Naive thymus-derived CD4-positive, alpha-beta T cell (primary cell): ENCODE measurements at regions of chr19 and their contacts with region 1.

Region 1: DNA sequence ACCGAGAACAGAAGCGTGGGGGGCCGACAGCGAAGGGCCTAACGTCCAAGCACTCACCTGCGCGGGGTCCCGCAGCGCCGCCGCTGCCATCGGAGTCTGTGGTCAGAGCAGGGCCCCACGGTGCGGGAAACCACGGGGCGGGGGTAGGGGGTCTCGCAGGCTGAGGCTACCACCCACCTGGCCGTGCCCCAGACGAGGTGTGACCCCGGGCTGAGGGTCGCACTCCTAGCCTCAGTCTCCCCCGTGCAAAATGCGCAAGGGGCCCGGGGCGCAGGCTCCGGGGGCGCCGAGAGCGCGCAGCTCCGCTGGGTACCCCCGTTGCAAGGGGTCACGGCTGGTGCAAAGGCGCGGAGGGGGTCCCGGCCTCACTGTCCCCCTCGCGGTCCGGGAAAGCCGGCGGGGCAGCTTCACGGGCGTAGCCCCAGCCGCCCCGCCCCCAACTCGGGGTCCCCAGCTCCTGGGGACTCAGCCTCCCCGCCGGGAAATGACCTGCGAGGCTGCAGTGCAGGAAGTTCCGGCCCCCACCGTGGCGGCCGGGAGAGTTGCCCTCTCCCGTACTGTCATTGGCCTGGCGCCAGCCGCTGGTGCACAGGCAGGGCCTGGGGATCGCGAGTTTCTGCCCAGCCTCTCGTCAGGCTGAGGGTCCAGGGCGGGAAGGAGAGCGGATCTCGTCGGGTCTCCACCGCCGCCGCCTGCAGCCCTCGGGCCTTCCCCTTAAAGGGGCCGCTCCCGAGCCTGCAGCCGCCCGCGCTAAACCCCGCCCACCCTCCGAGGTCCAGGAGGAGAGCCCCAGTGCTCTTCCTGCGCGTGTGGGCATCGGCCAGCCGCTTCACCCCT is at the start of gene ZNF792:
- DNase-seq: peak; percentile 20 to 67 (median 36)
- ATAC-seq: peak; percentile 63
- H3K4me3 ChIP-seq: peak within 1 kb of the TSS; percentile 74
- H3K4me3 Mint-ChIP-seq: peak within 1 kb of the TSS; percentile 90 to 98 (median 96)
- H3K27ac ChIP-seq: peak within 1 kb of the TSS; percentile 80
- H3K27ac Mint-ChIP-seq: peak within 1 kb of the TSS; percentile 86 to 99 (median 93)
- H3K4me1 ChIP-seq: peaks cover 14 to 17% of the 10 kb centered on the region in 2 donors
- H3K4me1 Mint-ChIP-seq: peaks cover 21 to 42% (median 26%) of the 10 kb centered on the region in 7 donors
- H3K27me3 ChIP-seq: no peaks in the 10 kb centered on the region
- H3K27me3 Mint-ChIP-seq: peaks cover 0 to under 1% (median 0%) of the 10 kb centered on the region in 5 donors
- total RNA-seq, gene ZNF792: 11.0 to 33.9 (median 14.7) TPM

Region 2: DNA sequence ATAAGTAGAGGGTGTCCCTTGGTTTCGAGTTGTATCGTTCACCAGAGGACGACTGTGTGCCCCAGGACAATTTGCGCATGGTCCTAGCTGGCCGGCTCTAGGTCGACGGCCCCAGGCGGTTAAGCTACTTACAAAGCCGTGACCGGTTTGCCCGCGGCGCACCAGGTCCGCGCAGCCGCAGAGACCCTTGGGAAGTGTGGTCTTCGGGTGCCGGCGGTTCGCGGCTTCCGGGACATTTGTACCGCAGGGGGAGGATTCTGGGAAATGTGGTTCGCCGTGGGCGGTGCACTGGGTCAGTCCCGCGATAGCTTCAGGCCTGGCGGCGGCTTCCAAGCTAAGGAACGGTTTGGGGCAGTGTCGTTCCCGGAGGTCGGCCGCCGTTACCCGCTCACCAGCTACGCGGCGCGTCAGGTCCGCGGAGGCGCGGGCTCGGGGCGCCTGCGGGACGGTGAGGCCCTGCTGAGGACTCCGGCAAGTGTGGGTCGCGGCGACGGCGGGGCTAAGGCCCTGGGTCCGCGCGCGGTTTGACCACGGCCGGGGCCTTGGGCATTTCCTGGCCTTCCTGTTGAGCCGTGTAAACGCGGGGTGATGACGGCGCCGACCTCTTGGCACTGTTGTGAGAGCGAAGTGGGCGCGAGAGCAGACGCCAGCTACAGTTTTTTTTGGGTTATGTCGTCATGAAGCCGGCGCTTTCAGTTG is 286.3 kb before region 1 on chr19 and contains the start of gene ZNF302:
- CTCF ChIA-PET with region 1: no interaction called
- POLR2A ChIA-PET with region 1: interaction called, 4 read pairs
- intact Hi-C with region 1: loop called in 1 of 2 experiments (anchors 5 kb)
- DNase-seq: peak; percentile 87 to 96 (median 94)
- ATAC-seq: peak; percentile 95
- H3K4me3 ChIP-seq: peak within 1 kb of the TSS; percentile 93
- H3K4me3 Mint-ChIP-seq: peak within 1 kb of the TSS; percentile 92 to 99 (median 96)
- H3K27ac ChIP-seq: peak within 1 kb of the TSS; percentile 80
- H3K27ac Mint-ChIP-seq: peak within 1 kb of the TSS; percentile 94 to 100 (median 99)
- H3K4me1 ChIP-seq: peaks cover 14 to 15% of the 10 kb centered on the region in 2 donors
- H3K4me1 Mint-ChIP-seq: peaks cover 20 to 56% (median 35%) of the 10 kb centered on the region in 7 donors
- H3K27me3 ChIP-seq: no peaks in the 10 kb centered on the region
- H3K27me3 Mint-ChIP-seq: peaks cover 9 to 18% (median 12%) of the 10 kb centered on the region in 5 donors
- total RNA-seq, gene ZNF302: 13.6 to 61.4 (median 25.7) TPM

Region 3: DNA sequence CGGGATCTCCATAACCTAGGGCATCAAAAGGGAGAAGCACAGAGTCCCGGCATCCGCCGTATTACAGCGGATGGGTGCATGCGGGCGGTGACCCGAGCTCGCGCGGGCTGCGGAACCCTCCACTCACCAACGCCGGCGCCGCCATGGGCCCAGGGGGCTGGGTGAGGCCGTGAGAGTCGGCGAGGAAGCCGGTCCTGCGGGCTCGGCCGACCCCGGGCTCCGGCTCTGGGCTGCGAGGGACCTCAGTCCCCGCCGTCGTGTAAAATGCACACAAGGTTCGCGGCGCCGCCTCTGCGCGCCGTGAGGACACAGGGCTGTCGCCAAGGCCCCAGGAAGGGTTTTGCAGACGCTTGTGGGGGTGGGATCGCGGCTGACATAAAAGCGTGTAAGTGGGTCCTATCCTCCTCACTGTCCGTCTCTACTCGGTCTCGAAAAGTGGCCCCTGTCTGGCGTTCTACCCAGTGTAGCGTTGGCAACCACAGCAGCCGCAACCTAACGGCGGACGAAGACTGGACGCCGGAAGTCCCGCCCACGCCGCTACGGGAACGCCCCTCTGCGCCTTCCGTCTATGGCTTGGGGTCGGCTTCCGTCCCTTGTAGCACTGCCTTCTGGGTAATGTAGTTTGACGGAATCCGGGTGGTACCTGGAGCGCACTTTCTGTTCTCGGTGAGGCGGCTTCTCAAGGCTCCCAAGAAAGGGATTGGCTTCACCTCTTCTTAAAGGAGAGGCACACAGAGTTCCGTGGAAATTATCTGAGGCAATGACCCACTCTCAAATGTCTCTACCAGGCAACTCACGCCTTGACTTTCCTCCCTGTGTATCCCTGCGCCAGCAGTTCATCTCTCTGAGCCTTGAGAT is 190.9 kb before region 1 on chr19 and contains the start of gene ZNF599:
- CTCF ChIA-PET with region 1: no interaction called
- POLR2A ChIA-PET with region 1: interaction called, 3 read pairs
- intact Hi-C with region 1: loop called in 1 of 2 experiments (anchors 2 kb)
- DNase-seq: peak; percentile 72 to 89 (median 87)
- ATAC-seq: peak; percentile 99
- H3K4me3 ChIP-seq: peak within 1 kb of the TSS; percentile 88
- H3K4me3 Mint-ChIP-seq: peak within 1 kb of the TSS; percentile 92 to 99 (median 96)
- H3K27ac ChIP-seq: peak within 1 kb of the TSS; percentile 81
- H3K27ac Mint-ChIP-seq: peak within 1 kb of the TSS; percentile 84 to 97 (median 95)
- H3K4me1 ChIP-seq: peaks cover 7 to 10% of the 10 kb centered on the region in 2 donors
- H3K4me1 Mint-ChIP-seq: peaks cover 13 to 21% (median 20%) of the 10 kb centered on the region in 7 donors
- H3K27me3 ChIP-seq: no peaks in the 10 kb centered on the region
- H3K27me3 Mint-ChIP-seq: peaks cover 0 to 15% (median 5%) of the 10 kb centered on the region in 5 donors
- total RNA-seq, gene ZNF599: 2.9 to 11.6 (median 5.3) TPM

Region 4: GRCh38 chr19:34926685-34927375 is 37.0 kb before region 1 on chr19 and contains the start of gene ZNF30:
- CTCF ChIA-PET with region 1: no interaction called
- POLR2A ChIA-PET with region 1: interaction called, 7 read pairs
- intact Hi-C with region 1: loop called (anchors 2 to 5 kb)
- DNase-seq: peak; percentile 57 to 78 (median 74)
- ATAC-seq: peak; percentile 95
- H3K4me3 ChIP-seq: peak within 1 kb of the TSS; percentile 76
- H3K4me3 Mint-ChIP-seq: peak within 1 kb of the TSS; percentile 84 to 95 (median 92)
- H3K27ac ChIP-seq: peak within 1 kb of the TSS; percentile 61
- H3K27ac Mint-ChIP-seq: peak within 1 kb of the TSS; percentile 49 to 84 (median 72)
- H3K4me1 ChIP-seq: peaks cover 0 to 5% of the 10 kb centered on the region in 2 donors
- H3K4me1 Mint-ChIP-seq: peaks cover 10 to 34% (median 23%) of the 10 kb centered on the region in 7 donors
- H3K27me3 ChIP-seq: no peaks in the 10 kb centered on the region
- H3K27me3 Mint-ChIP-seq: peaks cover 0 to 6% (median 0%) of the 10 kb centered on the region in 5 donors
- total RNA-seq, gene ZNF30: 2.0 to 13.1 (median 3.5) TPM

Region 5: GRCh38 chr19:34953092-34953491 is 10.7 kb before region 1 on chr19:
- CTCF ChIA-PET with region 1: no interaction called
- POLR2A ChIA-PET with region 1: interaction called, 14 read pairs
- intact Hi-C with region 1: no loop called
- DNase-seq: no peak
- ATAC-seq: no peak
- H3K4me3 ChIP-seq: no peak overlapping the region
- H3K4me3 Mint-ChIP-seq: no peak overlapping the region
- H3K27ac ChIP-seq: no peak overlapping the region
- H3K27ac Mint-ChIP-seq: no peak overlapping the region
- H3K4me1 ChIP-seq: no peaks in the 10 kb centered on the region
- H3K4me1 Mint-ChIP-seq: peaks cover 0 to 1% (median 0%) of the 10 kb centered on the region in 7 donors
- H3K27me3 ChIP-seq: no peaks in the 10 kb centered on the region
- H3K27me3 Mint-ChIP-seq: no peaks in the 10 kb centered on the region

Region 6: GRCh38 chr19:34999498-35000341 is 35.9 kb after region 1 on chr19 and contains the start of gene GRAMD1A:
- CTCF ChIA-PET with region 1: interaction called, 4 read pairs
- POLR2A ChIA-PET with region 1: interaction called, 10 read pairs
- intact Hi-C with region 1: no loop called
- DNase-seq: peak; percentile 48 to 86 (median 63)
- ATAC-seq: peak; percentile 74
- H3K4me3 ChIP-seq: peak within 1 kb of the TSS; percentile 72
- H3K4me3 Mint-ChIP-seq: peak within 1 kb of the TSS; percentile 94 to 100 (median 98)
- H3K27ac ChIP-seq: peak within 1 kb of the TSS; percentile 97
- H3K27ac Mint-ChIP-seq: peak within 1 kb of the TSS; percentile 95 to 100 (median 98)
- H3K4me1 ChIP-seq: peaks cover 66 to 72% of the 10 kb centered on the region in 2 donors
- H3K4me1 Mint-ChIP-seq: peaks cover 58 to 81% (median 73%) of the 10 kb centered on the region in 7 donors
- H3K27me3 ChIP-seq: no peaks in the 10 kb centered on the region
- H3K27me3 Mint-ChIP-seq: no peaks in the 10 kb centered on the region
- total RNA-seq, gene GRAMD1A: 90.1 to 286 (median 253) TPM

Region 7: GRCh38 chr19:35090506-35091237 is 126.9 kb after region 1 on chr19:
- CTCF ChIA-PET with region 1: no interaction called
- POLR2A ChIA-PET with region 1: no interaction called
- intact Hi-C with region 1: no loop called
- DNase-seq: peak in 7 of 9 donors; percentile 13 to 43 (median 30)
- ATAC-seq: peak; percentile 80
- H3K4me3 ChIP-seq: no peak overlapping the region
- H3K4me3 Mint-ChIP-seq: peak overlapping the region in 4 of 10 donors; percentile 23 to 56 (median 30)
- H3K27ac ChIP-seq: no peak overlapping the region
- H3K27ac Mint-ChIP-seq: no peak overlapping the region
- H3K4me1 ChIP-seq: peaks cover 7 to 16% of the 10 kb centered on the region in 2 donors
- H3K4me1 Mint-ChIP-seq: peaks cover 0 to 10% (median 4%) of the 10 kb centered on the region in 7 donors
- H3K27me3 ChIP-seq: no peaks in the 10 kb centered on the region
- H3K27me3 Mint-ChIP-seq: peaks cover 0 to 10% (median 3%) of the 10 kb centered on the region in 5 donors